ENCODE measurements at regions of chr11 and their contacts with region 1.

Region 1: DNA sequence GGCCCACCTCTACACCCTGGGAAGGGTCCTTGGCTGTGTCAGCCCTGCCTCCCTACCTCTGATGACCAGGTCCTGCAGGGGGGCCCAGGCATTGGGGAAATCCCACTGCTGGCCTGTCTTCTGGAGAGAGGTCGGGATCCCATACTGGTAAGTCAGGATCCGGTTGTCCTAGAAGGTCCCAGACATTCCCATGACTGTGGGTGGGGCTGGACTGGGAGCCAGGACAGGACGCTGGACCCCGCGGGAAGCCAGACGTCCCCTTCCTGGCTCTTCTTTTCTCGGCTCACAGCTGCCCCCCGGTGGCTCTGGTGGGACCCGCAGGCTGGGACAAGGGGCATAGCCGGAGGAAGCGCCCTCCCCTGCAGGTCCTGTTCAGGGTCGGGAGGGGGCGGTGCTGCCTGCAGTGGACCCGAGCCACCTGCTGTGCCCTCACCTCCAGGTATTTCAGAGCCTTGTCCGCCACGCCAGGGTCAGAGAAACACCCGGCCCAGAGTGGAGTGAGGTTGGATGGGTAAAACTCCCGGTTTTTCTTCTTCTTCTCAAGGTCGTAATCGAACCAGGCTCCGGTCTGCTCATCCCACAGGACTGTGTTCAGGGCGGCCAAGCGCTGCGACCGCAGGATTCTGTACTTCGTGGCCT is 20.0 kb downstream of the TREH start:
- DNase-seq: peak; percentile 84
- H3K4me3 ChIP-seq: no peak overlapping the region
- H3K27ac ChIP-seq: peak overlapping the region; percentile 7 to 20
- H3K4me1 ChIP-seq: no peaks in the 10 kb centered on the region
- H3K27me3 ChIP-seq: no peaks in the 10 kb centered on the region
- CTCF ChIP-seq: peak; percentile 87 to 99 (median 94)
- POLR2A ChIP-seq: no peak

Region 2: DNA sequence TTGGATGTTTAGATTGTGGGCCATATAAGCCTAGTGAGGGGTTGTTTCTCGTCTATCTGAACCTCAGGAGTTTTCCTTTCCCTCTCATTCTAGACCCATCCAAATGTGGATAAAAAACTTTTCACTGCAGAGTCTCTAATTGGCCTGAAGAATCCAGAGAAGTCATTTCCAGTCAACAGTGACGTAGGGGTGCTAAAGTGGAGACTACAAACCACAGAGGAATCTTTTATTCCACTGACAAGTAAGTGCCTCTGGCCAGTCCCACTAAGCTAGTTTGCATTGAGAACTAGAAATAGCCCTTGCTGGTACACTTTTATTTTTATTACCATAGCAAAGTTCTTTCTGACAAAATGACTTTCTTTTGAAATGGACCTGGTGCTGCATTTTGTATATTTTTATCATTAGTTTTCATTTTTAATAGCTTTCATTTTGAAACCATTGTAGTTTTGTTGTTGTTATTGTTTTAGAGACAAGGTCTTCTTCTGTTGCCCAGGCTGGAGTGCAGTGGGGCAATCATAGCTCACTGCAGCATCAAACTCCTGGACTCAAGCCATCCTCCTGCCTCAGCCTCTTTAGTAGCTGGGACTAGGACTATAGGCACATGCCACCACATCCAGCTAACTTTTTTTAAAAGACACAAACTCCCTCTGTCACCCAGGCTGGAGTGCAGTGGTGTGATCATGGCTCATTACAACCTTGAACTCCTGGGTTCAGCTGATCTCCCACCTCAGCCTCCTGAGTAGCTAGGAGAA is 66.6 kb before region 1 on chr11:
- intact Hi-C with region 1: loop called (anchors 5 kb)
- DNase-seq: no peak
- H3K4me3 ChIP-seq: no peak overlapping the region
- H3K27ac ChIP-seq: peak overlapping the region; percentile 36 to 42
- H3K4me1 ChIP-seq: peaks cover 2% of the 10 kb centered on the region
- H3K27me3 ChIP-seq: no peaks in the 10 kb centered on the region
- CTCF ChIP-seq: no peak
- POLR2A ChIP-seq: no peak

Region 3: DNA sequence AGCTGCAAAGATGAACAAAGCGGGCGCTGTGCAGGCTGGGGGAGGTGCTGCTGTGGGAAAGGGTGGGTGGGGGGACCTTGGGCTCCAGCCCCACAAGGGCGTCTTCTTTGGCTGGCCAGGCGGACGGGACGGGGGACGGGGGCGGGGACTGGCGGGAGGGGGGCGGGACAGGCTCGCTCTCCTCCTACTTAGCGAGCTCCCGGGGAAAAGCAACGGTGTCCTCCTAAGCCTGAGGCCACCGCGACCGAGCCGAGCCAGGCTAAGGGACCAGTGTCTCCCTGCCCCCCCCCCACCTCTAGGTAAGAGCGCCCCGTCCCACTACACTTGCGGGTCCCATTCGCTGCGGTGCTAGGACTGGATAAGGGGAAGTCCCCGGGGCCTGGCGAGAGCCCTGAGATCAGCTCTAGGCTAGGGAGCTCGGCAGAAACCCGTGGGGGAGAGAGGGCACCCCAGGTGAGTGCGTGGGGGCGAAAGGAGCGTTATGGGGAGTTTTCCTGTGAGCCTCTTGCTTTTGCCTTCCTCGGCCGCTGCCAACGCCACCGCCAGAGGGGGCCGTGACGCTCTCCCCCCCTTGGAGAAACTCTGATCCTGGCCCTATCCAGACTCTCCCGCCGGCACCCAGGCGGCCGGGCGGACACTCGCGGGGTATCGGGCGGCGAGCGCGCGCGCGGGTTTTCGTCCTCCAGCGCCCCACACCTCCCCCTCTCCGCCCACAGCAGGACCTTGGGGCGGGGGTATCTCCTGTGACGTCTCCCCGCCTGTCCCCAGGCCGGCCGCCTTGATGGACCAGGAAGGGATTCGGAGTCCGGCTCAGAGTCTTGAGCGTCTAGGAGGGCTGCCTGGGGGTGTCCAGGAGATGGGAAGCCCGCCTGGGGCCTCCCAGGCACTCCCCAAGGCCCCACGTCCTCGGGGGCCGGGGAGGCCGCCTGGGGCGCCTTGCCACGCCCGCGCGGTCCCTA is 51.8 kb before region 1 on chr11 and contains the start of gene PHLDB1:
- intact Hi-C with region 1: loop called (anchors 5 kb)
- DNase-seq: peak; percentile 58
- H3K4me3 ChIP-seq: peak within 1 kb of the TSS; percentile 60
- H3K27ac ChIP-seq: peak within 1 kb of the TSS; percentile 87 to 88
- H3K4me1 ChIP-seq: peaks cover 5% of the 10 kb centered on the region
- H3K27me3 ChIP-seq: no peaks in the 10 kb centered on the region
- CTCF ChIP-seq: peak; percentile 41 to 70 (median 64)
- POLR2A ChIP-seq: no peak
- total RNA-seq, gene PHLDB1: 74.5 to 113 TPM

Region 4: DNA sequence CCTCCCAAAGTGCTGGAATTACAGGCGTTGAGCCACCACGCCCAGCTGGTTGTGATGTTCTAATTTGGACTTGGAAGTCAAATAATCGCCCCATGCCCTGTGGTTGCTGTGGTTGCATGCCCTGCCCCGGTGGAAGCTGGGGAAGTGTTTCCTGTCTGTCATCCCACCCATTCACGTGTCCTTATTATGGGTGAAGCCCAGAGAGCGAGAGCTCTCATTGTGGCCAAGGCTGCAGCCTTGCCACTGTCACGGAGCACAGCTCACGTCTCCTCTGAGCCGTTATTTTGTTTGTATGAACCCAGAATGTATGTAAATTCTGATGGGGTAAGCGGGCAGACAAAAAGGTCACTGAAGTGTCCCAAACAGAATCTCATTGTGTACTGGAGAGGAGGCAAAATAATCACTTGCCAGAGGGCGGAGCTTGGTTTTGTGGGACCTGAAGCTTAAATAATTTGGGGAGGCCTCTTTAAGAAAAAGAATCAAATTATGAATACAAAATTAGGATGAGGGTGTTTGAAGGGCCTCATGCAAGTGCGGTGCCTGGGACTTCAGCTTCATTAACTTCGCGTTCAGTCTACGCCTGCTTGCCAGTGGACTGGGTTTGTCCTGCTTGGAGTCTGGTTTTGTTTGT is 45.8 kb after region 1 on chr11:
- intact Hi-C with region 1: no loop called
- DNase-seq: no peak
- H3K4me3 ChIP-seq: no peak overlapping the region
- H3K27ac ChIP-seq: no peak overlapping the region
- H3K4me1 ChIP-seq: no peaks in the 10 kb centered on the region
- H3K27me3 ChIP-seq: no peaks in the 10 kb centered on the region
- CTCF ChIP-seq: no peak
- POLR2A ChIP-seq: no peak

Region 5: DNA sequence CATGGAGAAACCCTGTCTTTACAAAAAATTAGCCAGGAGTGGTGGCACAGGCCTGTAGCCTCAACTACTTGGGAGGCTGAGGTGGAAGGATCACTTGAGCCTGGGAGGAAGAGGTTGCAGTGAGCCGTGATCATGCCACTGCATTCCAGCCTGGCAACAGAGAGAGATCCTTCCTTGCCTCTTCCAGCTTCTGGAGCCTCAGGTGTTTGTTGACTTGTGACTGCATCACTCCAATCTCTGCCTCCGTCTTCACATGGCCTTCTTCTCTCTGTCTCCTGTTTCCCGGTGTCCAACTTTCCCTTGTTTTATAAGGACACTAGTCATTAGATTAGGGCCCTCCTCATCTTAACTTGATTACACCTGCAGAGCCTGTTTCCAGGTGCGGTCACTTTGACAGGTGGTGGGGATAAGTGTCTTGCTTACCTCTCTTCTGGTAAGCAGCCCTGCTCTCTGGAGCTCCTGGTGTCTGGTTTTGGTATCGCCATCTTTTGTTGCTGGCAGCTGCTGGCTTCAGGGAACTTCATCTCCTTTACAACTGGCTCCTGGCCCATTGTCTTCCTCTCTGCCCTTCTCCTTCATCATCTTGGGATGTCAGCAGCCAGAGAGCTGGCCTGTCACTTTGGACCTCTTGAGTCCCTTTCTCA is 730.3 kb after region 1 on chr11:
- intact Hi-C with region 1: no loop called
- DNase-seq: no peak
- H3K4me3 ChIP-seq: no peak overlapping the region
- H3K27ac ChIP-seq: no peak overlapping the region
- H3K4me1 ChIP-seq: no peaks in the 10 kb centered on the region
- H3K27me3 ChIP-seq: no peaks in the 10 kb centered on the region
- CTCF ChIP-seq: no peak
- POLR2A ChIP-seq: no peak